Sigmoid colon (tissue), 7 donors: ENCODE measurements at regions of chr4 and their contacts with region 1.

Region 1: GRCh38 chr4:2934813-2935761 is 28.1 kb downstream of the NOP14 start:
- DNase-seq: peak; percentile 97
- H3K4me3 ChIP-seq: peak overlapping the region; percentile 85 to 97 (median 88)
- H3K27ac ChIP-seq: peak overlapping the region; percentile 91 to 94 (median 92)
- H3K4me1 ChIP-seq: peaks cover 0 to 54% (median 44%) of the 10 kb centered on the region in 4 donors
- H3K27me3 ChIP-seq: no peaks in the 10 kb centered on the region
- CTCF ChIP-seq: no peak
- EP300 ChIP-seq: no peak
- POLR2A ChIP-seq: peak; percentile 91 to 94

Region 2: GRCh38 chr4:2765832-2766526 is 169.1 kb before region 1 on chr4:
- intact Hi-C with region 1: loop called (anchors 2 kb)
- DNase-seq: peak; percentile 40
- H3K4me3 ChIP-seq: no peak overlapping the region
- H3K27ac ChIP-seq: no peak overlapping the region
- H3K4me1 ChIP-seq: peaks cover 0 to 13% (median 8%) of the 10 kb centered on the region in 4 donors
- H3K27me3 ChIP-seq: peaks cover 0 to 4% (median 0%) of the 10 kb centered on the region in 3 donors
- CTCF ChIP-seq: no peak
- EP300 ChIP-seq: no peak
- POLR2A ChIP-seq: no peak

Region 3: GRCh38 chr4:2843263-2843940 is 91.7 kb before region 1 on chr4 and contains the start of gene ADD1:
- intact Hi-C with region 1: loop called (anchors 2 kb)
- DNase-seq: peak; percentile 96
- H3K4me3 ChIP-seq: peak within 1 kb of the TSS; percentile 86 to 95 (median 90)
- H3K27ac ChIP-seq: peak within 1 kb of the TSS; percentile 93 to 99 (median 96)
- H3K4me1 ChIP-seq: peaks cover 0 to 52% (median 42%) of the 10 kb centered on the region in 4 donors
- H3K27me3 ChIP-seq: no peaks in the 10 kb centered on the region
- CTCF ChIP-seq: no peak
- EP300 ChIP-seq: peak in 1 of 4 donors; percentile 8
- POLR2A ChIP-seq: peak; percentile 81 to 90
- total RNA-seq, gene ADD1: 166 to 378 (median 183) TPM